Right ventricle myocardium inferior (tissue), 1 donor: ENCODE measurements at regions of chr2 and their contacts with region 1.

Region 1: GRCh38 chr2:95389245-95390119 is 13.0 kb upstream of the FAHD2A start:
- DNase-seq: no peak
- ATAC-seq: peak; percentile 59

Region 2: GRCh38 chr2:95345566-95346230 is 43.8 kb before region 1 on chr2:
- intact Hi-C with region 1: loop called (anchors 5 kb)
- DNase-seq: peak; percentile 90
- ATAC-seq: peak; percentile 95